ENCODE measurements at regions of chr10 and their contacts with region 1.

Region 1: DNA sequence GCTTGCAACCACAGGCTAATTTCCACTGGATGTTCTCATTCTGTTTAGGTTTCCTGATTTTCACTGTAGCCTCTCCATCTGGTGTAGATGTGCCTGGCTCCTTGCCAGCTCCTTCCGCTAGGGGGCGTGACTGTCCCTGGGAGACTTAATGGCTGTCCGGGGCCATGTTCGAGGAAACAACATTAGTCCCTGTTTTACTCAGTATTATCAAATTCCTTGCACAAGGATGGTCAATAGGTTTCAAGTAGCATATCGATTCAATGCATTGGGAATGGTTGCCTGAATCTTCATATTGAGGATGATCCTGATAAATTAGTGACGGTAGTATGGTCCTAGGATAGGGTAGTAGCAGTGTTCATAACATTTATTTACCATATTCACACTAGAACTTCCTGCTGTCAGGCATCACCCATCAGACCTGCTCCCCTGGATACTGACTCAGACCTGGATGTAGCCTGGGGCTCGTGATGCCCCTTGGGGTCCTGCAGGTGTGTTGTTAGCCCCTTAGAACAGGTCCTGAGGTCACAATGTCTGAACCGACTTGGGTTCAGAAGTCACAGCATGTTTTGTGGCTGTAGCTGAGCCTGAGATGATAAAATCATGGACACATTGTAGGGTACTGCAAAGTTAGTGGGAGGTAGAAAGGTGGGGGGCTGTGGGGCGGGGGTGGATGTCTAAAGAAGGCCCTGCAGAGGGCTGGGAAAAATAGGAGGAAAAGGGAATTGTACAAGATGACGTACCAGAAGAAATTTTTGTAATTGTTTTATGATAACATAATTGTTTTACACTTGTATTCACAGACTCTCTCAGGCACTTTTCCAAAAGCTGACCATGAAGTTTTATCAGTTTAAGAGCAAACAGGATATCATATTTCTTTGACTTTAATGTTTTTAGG is 8.9 kb upstream of the EXOC6 start:
- DNase-seq: peak; percentile 89
- ATAC-seq: peak; percentile 88
- H3K4me3 Mint-ChIP-seq: no peak overlapping the region
- H3K27ac Mint-ChIP-seq: no peak overlapping the region
- H3K4me1 Mint-ChIP-seq: peaks cover 11% of the 10 kb centered on the region
- H3K27me3 Mint-ChIP-seq: no peaks in the 10 kb centered on the region; the same call in 1 of the 2 replicates
- CTCF ChIP-seq: peak; percentile 91

Region 2: GRCh38 chr10:92787557-92788152 is 51.8 kb before region 1 on chr10:
- CTCF ChIA-PET with region 1: interaction called, 12 read pairs
- POLR2A ChIA-PET with region 1: no interaction called
- DNase-seq: peak; percentile 41
- ATAC-seq: peak; percentile 79
- H3K4me3 Mint-ChIP-seq: no peak overlapping the region; the same call in 1 of the 2 replicates
- H3K27ac Mint-ChIP-seq: peak overlapping the region; percentile 90
- H3K4me1 Mint-ChIP-seq: peaks cover 32% of the 10 kb centered on the region
- H3K27me3 Mint-ChIP-seq: peaks cover 3% of the 10 kb centered on the region; the same call in 1 of the 2 replicates
- CTCF ChIP-seq: no peak

Region 3: DNA sequence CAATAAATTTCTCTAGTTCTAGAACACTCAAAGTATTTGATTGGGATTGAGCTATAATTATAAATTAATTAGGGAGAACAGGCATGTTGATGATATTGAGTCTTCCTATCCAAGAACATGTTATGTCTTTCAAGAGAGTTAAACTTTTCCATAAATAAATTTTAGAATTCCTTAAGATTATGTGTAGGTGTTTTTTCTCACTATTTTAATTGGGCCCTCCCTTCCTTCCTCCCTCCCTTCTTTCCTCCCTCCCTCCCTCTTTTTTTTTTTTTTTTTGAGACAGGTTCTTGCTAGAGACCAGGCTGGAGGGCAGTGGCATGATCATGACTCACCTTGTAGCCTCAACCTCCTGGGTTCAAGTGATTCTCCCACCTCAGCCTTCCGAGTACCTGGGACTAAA is 29.1 kb after region 1 on chr10:
- CTCF ChIA-PET with region 1: interaction called, 10 read pairs
- POLR2A ChIA-PET with region 1: no interaction called
- DNase-seq: no peak
- ATAC-seq: no peak
- H3K4me3 Mint-ChIP-seq: no peak overlapping the region
- H3K27ac Mint-ChIP-seq: no peak overlapping the region
- H3K4me1 Mint-ChIP-seq: peaks cover 6% of the 10 kb centered on the region; the same call in 1 of the 2 replicates
- H3K27me3 Mint-ChIP-seq: no peaks in the 10 kb centered on the region
- CTCF ChIP-seq: no peak

Measured in WTC11 (cell line).